Naive thymus-derived CD4-positive, alpha-beta T cell (primary cell): ENCODE measurements at regions of chr10 and their contacts with region 1.

Region 1: GRCh38 chr10:8404391-8405120 is 350.1 kb downstream of the GATA3 start:
- DNase-seq: peak in 7 of 9 donors; percentile 78 to 93 (median 89)
- ATAC-seq: peak; percentile 85
- H3K4me3 ChIP-seq: peak overlapping the region; percentile 47
- H3K4me3 Mint-ChIP-seq: peak overlapping the region; percentile 30 to 88 (median 76)
- H3K27ac ChIP-seq: peak overlapping the region; percentile 74
- H3K27ac Mint-ChIP-seq: peak overlapping the region; percentile 86 to 98 (median 93)
- H3K4me1 ChIP-seq: peaks cover 59 to 60% of the 10 kb centered on the region in 2 donors
- H3K4me1 Mint-ChIP-seq: peaks cover 35 to 78% (median 73%) of the 10 kb centered on the region in 7 donors
- H3K27me3 ChIP-seq: no peaks in the 10 kb centered on the region
- H3K27me3 Mint-ChIP-seq: peaks cover 0 to 10% (median 0%) of the 10 kb centered on the region in 5 donors

Region 2: DNA sequence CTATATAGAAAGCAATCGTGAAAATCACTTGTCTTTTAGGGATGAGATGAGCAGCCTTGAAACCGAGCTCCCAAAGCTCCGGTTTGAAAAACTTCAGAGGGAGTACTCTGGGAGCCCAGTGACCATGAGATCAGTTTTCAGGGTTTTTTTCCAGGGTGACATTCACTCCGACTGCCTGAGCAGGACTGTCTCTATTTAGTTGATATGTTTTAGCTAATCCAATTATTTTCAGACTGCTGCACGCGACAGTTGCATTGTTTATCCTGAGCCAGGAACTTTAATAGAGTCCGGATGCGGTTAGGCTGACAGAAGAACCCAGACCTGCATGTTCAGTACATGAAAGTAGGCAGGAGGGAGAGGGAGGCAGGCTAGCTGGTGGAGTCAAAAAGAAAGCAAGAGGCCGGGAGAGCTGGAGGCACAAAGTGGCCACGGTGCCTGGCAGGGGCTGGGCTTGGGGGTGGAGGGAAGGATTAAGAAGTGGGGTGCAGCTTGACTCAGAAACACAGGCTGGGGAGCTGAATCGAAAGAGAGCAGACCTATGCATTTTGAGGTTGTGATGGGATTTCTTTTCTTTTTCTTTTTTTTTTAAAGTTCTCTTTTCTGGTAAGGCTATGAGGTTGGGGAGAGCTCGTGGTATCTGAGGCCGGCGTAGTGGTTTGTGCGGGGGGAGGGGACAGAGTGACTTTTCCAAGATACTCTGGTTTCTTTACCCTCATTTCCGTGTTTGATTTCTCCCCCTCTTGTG is 344.4 kb before region 1 on chr10:
- CTCF ChIA-PET with region 1: interaction called, 4 read pairs
- POLR2A ChIA-PET with region 1: interaction called, 6 read pairs
- intact Hi-C with region 1: loop called in 1 of 2 experiments (anchors 2 kb)
- DNase-seq: peak; percentile 17 to 79 (median 72)
- ATAC-seq: peak; percentile 45
- H3K4me3 ChIP-seq: peak overlapping the region; percentile 51
- H3K4me3 Mint-ChIP-seq: peak overlapping the region; percentile 87 to 100 (median 94)
- H3K27ac ChIP-seq: peak overlapping the region; percentile 82
- H3K27ac Mint-ChIP-seq: peak overlapping the region; percentile 88 to 99 (median 95)
- H3K4me1 ChIP-seq: peaks cover 52 to 62% of the 10 kb centered on the region in 2 donors
- H3K4me1 Mint-ChIP-seq: peaks cover 57 to 80% (median 76%) of the 10 kb centered on the region in 7 donors
- H3K27me3 ChIP-seq: no peaks in the 10 kb centered on the region
- H3K27me3 Mint-ChIP-seq: peaks cover 0 to 6% (median 0%) of the 10 kb centered on the region in 5 donors

Region 3: GRCh38 chr10:8245131-8245813 is 159.3 kb before region 1 on chr10:
- CTCF ChIA-PET with region 1: no interaction called
- POLR2A ChIA-PET with region 1: no interaction called
- intact Hi-C with region 1: loop called (anchors 1 to 2 kb)
- DNase-seq: peak in 7 of 9 donors; percentile 45 to 75 (median 67)
- ATAC-seq: peak; percentile 86
- H3K4me3 ChIP-seq: no peak overlapping the region
- H3K4me3 Mint-ChIP-seq: peak overlapping the region; percentile 56 to 86 (median 78)
- H3K27ac ChIP-seq: peak overlapping the region; percentile 61
- H3K27ac Mint-ChIP-seq: peak overlapping the region; percentile 80 to 96 (median 91)
- H3K4me1 ChIP-seq: peaks cover 27 to 32% of the 10 kb centered on the region in 2 donors
- H3K4me1 Mint-ChIP-seq: peaks cover 20 to 79% (median 55%) of the 10 kb centered on the region in 7 donors
- H3K27me3 ChIP-seq: no peaks in the 10 kb centered on the region
- H3K27me3 Mint-ChIP-seq: no peaks in the 10 kb centered on the region

Region 4: DNA sequence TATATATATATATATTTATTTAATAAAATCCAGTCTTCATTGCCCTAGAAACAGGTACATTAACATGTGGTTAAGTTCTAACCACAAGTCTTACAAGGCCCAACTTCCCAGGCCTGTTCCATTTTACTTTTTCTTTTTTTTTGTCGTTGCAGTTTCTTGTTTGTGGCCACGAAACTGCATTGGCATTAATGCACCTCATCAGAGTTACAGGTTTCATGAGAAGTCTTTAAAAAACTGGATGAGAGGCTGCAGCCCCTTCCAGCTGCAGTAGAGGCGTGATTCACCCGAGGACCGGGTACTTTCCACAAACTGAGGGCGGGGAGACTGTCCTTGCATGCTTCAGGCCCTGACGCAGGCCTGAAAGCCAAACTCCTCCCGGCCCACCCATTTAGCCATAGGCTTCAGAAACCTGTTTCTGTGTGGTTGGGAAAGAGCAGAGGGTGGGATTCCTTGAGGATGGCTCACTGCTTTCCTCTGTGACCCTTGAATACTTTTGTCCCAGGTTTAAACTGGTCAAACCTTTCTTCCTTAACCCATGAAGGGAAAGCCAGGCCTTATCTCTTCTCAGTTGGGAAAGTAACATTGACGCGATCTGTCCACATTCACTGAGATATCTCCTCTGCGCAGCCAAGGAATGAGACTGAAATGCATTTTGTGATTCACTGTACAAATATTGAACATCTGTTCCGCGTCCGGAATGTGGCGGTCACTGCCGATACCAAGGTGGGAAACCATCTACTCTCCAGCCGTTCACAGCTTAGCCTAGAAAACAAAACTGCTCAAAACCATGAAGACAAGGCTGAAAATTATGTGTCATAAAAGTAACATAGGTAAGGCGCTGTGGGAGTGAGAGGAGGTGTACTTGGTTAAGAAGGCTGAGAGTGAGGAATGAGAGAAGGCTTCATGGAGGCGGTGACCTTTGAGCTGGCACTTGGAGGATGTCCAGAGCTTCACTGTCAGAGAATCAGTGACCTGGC is 38.3 kb before region 1 on chr10:
- CTCF ChIA-PET with region 1: interaction called, 4 read pairs
- POLR2A ChIA-PET with region 1: no interaction called
- intact Hi-C with region 1: loop called (anchors 2 to 5 kb)
- DNase-seq: peak in 5 of 9 donors; percentile 3 to 38 (median 12)
- ATAC-seq: peak; percentile 78
- H3K4me3 ChIP-seq: no peak overlapping the region
- H3K4me3 Mint-ChIP-seq: peak overlapping the region in 3 of 10 donors; percentile 31 to 45 (median 41)
- H3K27ac ChIP-seq: no peak overlapping the region
- H3K27ac Mint-ChIP-seq: peak overlapping the region in 4 of 9 donors; percentile 54 to 75 (median 69)
- H3K4me1 ChIP-seq: peaks cover 18 to 23% of the 10 kb centered on the region in 2 donors
- H3K4me1 Mint-ChIP-seq: peaks cover 14 to 48% (median 30%) of the 10 kb centered on the region in 7 donors
- H3K27me3 ChIP-seq: no peaks in the 10 kb centered on the region
- H3K27me3 Mint-ChIP-seq: no peaks in the 10 kb centered on the region

Region 5: GRCh38 chr10:8435176-8436055 is 30.9 kb after region 1 on chr10:
- CTCF ChIA-PET with region 1: interaction called, 5 read pairs
- POLR2A ChIA-PET with region 1: interaction called, 3 read pairs
- intact Hi-C with region 1: loop called in 1 of 2 experiments (anchors 5 kb)
- DNase-seq: no peak
- ATAC-seq: no peak
- H3K4me3 ChIP-seq: no peak overlapping the region
- H3K4me3 Mint-ChIP-seq: no peak overlapping the region
- H3K27ac ChIP-seq: no peak overlapping the region
- H3K27ac Mint-ChIP-seq: no peak overlapping the region
- H3K4me1 ChIP-seq: peaks cover 18 to 19% of the 10 kb centered on the region in 2 donors
- H3K4me1 Mint-ChIP-seq: peaks cover 19 to 36% (median 32%) of the 10 kb centered on the region in 7 donors
- H3K27me3 ChIP-seq: no peaks in the 10 kb centered on the region
- H3K27me3 Mint-ChIP-seq: peaks cover 0 to 22% (median 5%) of the 10 kb centered on the region in 5 donors

Region 6: GRCh38 chr10:9097206-9097985 is 692.8 kb after region 1 on chr10:
- CTCF ChIA-PET with region 1: no interaction called
- POLR2A ChIA-PET with region 1: no interaction called
- intact Hi-C with region 1: loop called in 1 of 2 experiments (anchors 2 kb)
- DNase-seq: peak in 7 of 9 donors; percentile 29 to 89 (median 81)
- ATAC-seq: peak; percentile 81
- H3K4me3 ChIP-seq: no peak overlapping the region
- H3K4me3 Mint-ChIP-seq: peak overlapping the region in 7 of 10 donors; percentile 30 to 82 (median 67)
- H3K27ac ChIP-seq: no peak overlapping the region
- H3K27ac Mint-ChIP-seq: peak overlapping the region in 8 of 9 donors; percentile 64 to 97 (median 90)
- H3K4me1 ChIP-seq: peaks cover 0 to 26% of the 10 kb centered on the region in 2 donors
- H3K4me1 Mint-ChIP-seq: peaks cover 10 to 47% (median 43%) of the 10 kb centered on the region in 7 donors
- H3K27me3 ChIP-seq: no peaks in the 10 kb centered on the region
- H3K27me3 Mint-ChIP-seq: peaks cover 0 to 2% (median 0%) of the 10 kb centered on the region in 5 donors